CD4-positive, alpha-beta memory T cell (primary cell): ENCODE measurements at regions of chr4 and their contacts with region 1.

Region 1: DNA sequence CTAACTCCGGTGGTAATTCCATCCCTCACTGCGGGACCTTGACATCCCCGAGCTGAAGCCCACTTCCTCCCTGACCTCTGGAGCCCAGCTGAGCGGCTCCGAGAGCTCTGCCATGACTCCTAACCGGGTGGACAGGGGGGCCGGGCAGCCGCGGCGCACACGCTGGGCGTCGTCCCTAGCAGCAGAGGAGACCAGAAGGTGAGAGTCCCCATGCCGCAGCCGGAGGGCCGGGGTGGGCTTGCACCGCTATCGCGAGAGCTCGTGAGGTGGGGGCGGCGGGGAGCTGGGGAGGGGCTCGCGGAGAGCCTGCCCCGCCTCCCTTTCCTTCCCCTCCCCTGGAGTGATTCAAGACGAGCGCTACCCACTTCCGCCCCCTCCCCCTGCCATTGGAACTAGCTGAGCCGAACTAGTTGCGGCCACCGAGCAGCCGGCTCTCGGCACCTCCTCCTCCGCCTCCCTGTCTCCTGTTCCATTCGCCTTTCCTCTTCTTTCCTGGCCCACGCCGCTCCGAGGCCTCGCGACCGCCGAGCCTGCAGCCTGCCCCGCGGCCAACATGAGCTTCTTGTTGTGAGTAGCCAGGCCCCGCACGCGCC is at the start of gene MOB1B:
- DNase-seq: peak; percentile 81 to 88 (median 82)
- H3K4me3 ChIP-seq: peak within 1 kb of the TSS; percentile 79 to 95
- H3K4me3 Mint-ChIP-seq: peak within 1 kb of the TSS; percentile 97 to 99 (median 98)
- H3K27ac ChIP-seq: peak within 1 kb of the TSS; percentile 71
- H3K27ac Mint-ChIP-seq: peak within 1 kb of the TSS; percentile 49 to 94 (median 92)
- H3K4me1 ChIP-seq: peaks cover 17% of the 10 kb centered on the region
- H3K4me1 Mint-ChIP-seq: peaks cover 17 to 41% (median 26%) of the 10 kb centered on the region in 4 donors
- H3K27me3 ChIP-seq: no peaks in the 10 kb centered on the region
- H3K27me3 Mint-ChIP-seq: peaks cover 0 to 1% of the 10 kb centered on the region in 2 donors
- total RNA-seq, gene MOB1B: 10.2 to 10.8 TPM

Region 2: GRCh38 chr4:70651864-70652506 is 250.1 kb before region 1 on chr4:
- CTCF ChIA-PET with region 1: no interaction called
- POLR2A ChIA-PET with region 1: no interaction called
- intact Hi-C with region 1: loop called (anchors 1 kb)
- DNase-seq: peak in 4 of 5 donors; percentile 27 to 47 (median 32)
- H3K4me3 ChIP-seq: no peak overlapping the region
- H3K4me3 Mint-ChIP-seq: no peak overlapping the region
- H3K27ac ChIP-seq: no peak overlapping the region
- H3K27ac Mint-ChIP-seq: no peak overlapping the region
- H3K4me1 ChIP-seq: no peaks in the 10 kb centered on the region
- H3K4me1 Mint-ChIP-seq: peaks cover 0 to 4% (median 3%) of the 10 kb centered on the region in 4 donors
- H3K27me3 ChIP-seq: peaks cover 7% of the 10 kb centered on the region
- H3K27me3 Mint-ChIP-seq: peaks cover 2 to 5% of the 10 kb centered on the region in 2 donors